ENCODE measurements at regions of chr1 and their contacts with region 1.

Region 1: DNA sequence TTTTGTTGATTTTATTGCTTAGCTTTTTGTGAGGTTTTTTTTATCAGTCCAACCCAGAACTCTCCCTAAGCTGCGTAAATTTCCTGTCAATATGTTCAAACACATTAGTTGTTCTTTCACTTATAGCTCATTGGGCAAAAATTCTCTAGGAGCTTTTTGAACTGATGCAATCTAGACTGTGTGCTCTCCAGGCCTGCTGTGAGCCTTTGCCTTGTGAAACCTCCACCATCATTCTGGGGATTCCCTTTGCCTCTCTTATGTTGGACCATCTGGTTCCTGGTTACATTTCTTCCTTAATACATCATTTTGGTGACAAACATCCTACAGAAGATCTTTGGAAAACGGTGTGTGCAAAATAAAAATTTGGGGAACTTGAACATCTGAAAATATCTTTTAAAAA is 247.2 kb downstream of the LRRC7 start:
- DNase-seq: no peak
- ATAC-seq: no peak

Region 2: GRCh38 chr1:69320757-69321211 is 494.1 kb before region 1 on chr1:
- intact Hi-C with region 1: loop called (anchors 10 kb)
- DNase-seq: no peak
- ATAC-seq: no peak

Region 3: GRCh38 chr1:70083519-70083918 is 268.6 kb after region 1 on chr1:
- intact Hi-C with region 1: no loop called
- DNase-seq: no peak
- ATAC-seq: no peak

Measured in sciatic nerve (tissue), 2 donors.